Calu3 (cell line): ENCODE measurements at regions of chr18 and their contacts with region 1.

Region 1: DNA sequence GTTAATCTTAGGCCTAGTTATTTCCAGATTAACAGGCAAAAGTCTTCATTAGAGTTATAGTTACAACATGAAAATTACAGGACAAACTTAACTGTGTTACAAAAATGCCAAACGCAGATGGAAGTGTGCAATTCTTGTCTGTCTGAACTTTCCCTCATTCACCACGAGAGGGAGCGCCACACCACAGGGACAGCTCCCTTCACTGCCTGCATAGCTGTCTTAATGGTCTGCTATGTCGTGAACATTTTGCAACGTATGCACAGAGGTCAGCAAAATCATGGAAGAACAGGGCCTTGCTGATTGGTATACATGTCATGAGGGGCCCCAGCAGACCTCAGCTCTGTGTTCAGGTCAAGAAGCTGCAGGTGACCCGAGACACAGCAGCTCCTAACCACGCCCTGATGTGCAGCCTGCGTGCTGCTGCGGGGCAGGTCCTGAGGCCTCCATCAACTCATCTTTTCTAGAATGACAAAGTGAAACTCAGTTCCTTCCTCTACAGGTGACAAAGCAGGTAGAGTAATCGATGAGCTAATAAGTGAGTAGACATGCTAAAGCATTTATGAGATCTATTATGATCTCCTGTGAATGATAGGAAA is 78.8 kb upstream of the ATP8B1 start:
- DNase-seq: peak; percentile 78
- H3K4me3 Mint-ChIP-seq: no peak overlapping the region
- H3K27ac Mint-ChIP-seq: peak overlapping the region; percentile 37
- H3K4me1 Mint-ChIP-seq: peaks cover 31% of the 10 kb centered on the region
- H3K27me3 Mint-ChIP-seq: no peaks in the 10 kb centered on the region
- CTCF ChIP-seq: peak; percentile 85

Region 2: GRCh38 chr18:57748770-57749603 is 132.9 kb before region 1 on chr18:
- CTCF ChIA-PET with region 1: no interaction called
- intact Hi-C with region 1: no loop called
- DNase-seq: peak; percentile 46
- H3K4me3 Mint-ChIP-seq: peak overlapping the region; percentile 14
- H3K27ac Mint-ChIP-seq: peak overlapping the region; percentile 45
- H3K4me1 Mint-ChIP-seq: peaks cover 30% of the 10 kb centered on the region
- H3K27me3 Mint-ChIP-seq: no peaks in the 10 kb centered on the region
- CTCF ChIP-seq: no peak

Region 3: GRCh38 chr18:57895182-57895581 is 13.3 kb after region 1 on chr18:
- CTCF ChIA-PET with region 1: no interaction called
- intact Hi-C with region 1: no loop called
- DNase-seq: no peak
- H3K4me3 Mint-ChIP-seq: no peak overlapping the region
- H3K27ac Mint-ChIP-seq: no peak overlapping the region
- H3K4me1 Mint-ChIP-seq: peaks cover 46% of the 10 kb centered on the region
- H3K27me3 Mint-ChIP-seq: no peaks in the 10 kb centered on the region
- CTCF ChIP-seq: no peak

Region 4: DNA sequence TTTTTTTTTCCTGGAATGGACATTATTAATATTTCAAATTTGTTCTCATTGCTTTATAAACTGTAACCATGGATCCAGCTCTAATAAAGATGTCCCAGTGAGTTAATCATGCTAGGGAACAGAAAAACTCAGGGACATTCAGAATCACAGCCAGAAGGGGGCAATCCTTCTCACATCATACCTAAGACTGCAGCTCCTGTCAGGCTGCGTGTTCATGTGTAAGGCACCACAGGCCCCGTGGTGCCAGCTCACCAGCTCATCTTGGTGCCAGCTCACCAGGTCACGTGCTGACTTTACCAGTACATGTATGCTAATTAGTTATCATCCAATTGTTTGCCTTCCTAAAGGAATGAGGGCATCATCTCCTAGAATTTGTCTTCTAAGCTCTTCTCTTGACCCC is 77.4 kb after region 1 on chr18:
- CTCF ChIA-PET with region 1: interaction called, 11 read pairs
- intact Hi-C with region 1: loop called (anchors 5 kb)
- DNase-seq: peak; percentile 72
- H3K4me3 Mint-ChIP-seq: no peak overlapping the region
- H3K27ac Mint-ChIP-seq: no peak overlapping the region
- H3K4me1 Mint-ChIP-seq: peaks cover 31% of the 10 kb centered on the region
- H3K27me3 Mint-ChIP-seq: no peaks in the 10 kb centered on the region
- CTCF ChIP-seq: no peak

Region 5: GRCh38 chr18:58117786-58118403 is 236.0 kb after region 1 on chr18:
- CTCF ChIA-PET with region 1: interaction called, 14 read pairs
- intact Hi-C with region 1: loop called (anchors 5 kb)
- DNase-seq: peak; percentile 67
- H3K4me3 Mint-ChIP-seq: peak overlapping the region; percentile 43
- H3K27ac Mint-ChIP-seq: peak overlapping the region; percentile 96
- H3K4me1 Mint-ChIP-seq: peaks cover 66% of the 10 kb centered on the region
- H3K27me3 Mint-ChIP-seq: no peaks in the 10 kb centered on the region
- CTCF ChIP-seq: no peak

Region 6: GRCh38 chr18:58124475-58124874 is 242.6 kb after region 1 on chr18:
- CTCF ChIA-PET with region 1: interaction called, 14 read pairs
- intact Hi-C with region 1: loop called (anchors 5 kb)
- DNase-seq: no peak
- H3K4me3 Mint-ChIP-seq: no peak overlapping the region
- H3K27ac Mint-ChIP-seq: no peak overlapping the region
- H3K4me1 Mint-ChIP-seq: peaks cover 40% of the 10 kb centered on the region
- H3K27me3 Mint-ChIP-seq: no peaks in the 10 kb centered on the region
- CTCF ChIP-seq: no peak

Region 7: DNA sequence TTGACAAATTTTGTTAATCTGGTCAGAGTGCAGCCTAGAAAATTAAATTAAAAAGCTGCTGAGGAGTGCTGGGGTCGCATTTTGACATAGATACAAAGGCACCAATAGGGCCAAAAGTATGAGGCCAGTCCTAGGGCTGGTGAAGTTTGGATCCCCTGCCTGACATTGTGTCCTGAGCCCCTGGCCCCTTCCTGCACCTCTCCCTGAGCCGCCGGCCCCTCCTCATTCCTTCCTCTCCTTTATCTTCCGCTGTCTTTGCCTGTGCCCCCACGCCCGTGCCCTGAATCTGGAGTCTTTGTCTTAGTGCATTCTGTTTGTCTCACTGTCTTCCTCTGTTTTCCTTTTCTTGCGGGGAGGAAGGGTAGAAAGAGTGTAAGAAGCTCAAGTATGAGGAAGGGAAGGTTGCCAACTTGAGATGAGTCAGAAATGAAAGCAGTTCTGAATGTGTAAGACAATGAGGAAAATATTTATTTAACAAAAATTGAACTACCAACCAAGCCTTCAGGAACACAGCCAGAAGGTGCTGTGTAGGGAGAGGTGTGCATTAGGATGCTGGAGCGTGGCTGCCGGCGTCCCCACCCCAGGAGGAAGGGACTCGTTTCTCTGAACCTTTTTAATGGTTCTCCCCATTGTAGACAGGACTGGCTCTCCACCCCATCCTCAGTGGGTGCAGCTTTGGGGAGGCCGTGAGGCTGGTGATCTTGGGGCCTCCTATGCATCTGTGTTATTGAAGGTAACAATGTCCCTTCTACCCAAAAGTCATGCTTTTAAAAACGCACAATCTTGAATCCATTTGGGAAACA is 295.2 kb after region 1 on chr18:
- CTCF ChIA-PET with region 1: interaction called, 3 read pairs
- intact Hi-C with region 1: loop called (anchors 5 kb)
- DNase-seq: peak; percentile 63
- H3K4me3 Mint-ChIP-seq: peak overlapping the region; percentile 8
- H3K27ac Mint-ChIP-seq: peak overlapping the region; percentile 51
- H3K4me1 Mint-ChIP-seq: peaks cover 69% of the 10 kb centered on the region
- H3K27me3 Mint-ChIP-seq: no peaks in the 10 kb centered on the region
- CTCF ChIP-seq: no peak

Region 8: DNA sequence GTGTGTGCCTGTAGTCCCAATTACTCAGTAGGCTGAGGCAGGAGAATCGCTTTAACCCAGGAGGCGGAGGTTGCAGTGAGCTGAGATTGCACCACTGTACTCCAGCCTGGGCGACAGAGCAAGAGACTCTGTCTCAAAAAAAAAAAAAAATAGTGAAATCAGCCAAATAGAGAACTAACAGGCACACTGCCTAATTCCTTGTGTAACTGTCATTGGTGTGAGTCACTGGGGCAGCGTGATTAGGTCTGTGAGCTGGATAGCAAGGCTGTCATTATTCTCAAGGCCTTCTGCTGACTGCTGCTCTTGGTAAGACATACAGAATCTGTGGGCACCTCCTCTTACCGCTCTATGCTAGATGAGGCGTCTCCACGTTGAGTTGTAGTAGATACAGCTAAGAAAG is 432.4 kb after region 1 on chr18:
- CTCF ChIA-PET with region 1: no interaction called
- intact Hi-C with region 1: loop called (anchors 10 kb)
- DNase-seq: peak; percentile 49
- H3K4me3 Mint-ChIP-seq: peak overlapping the region; percentile 59
- H3K27ac Mint-ChIP-seq: peak overlapping the region; percentile 58
- H3K4me1 Mint-ChIP-seq: peaks cover 78% of the 10 kb centered on the region
- H3K27me3 Mint-ChIP-seq: no peaks in the 10 kb centered on the region
- CTCF ChIP-seq: no peak

Region 9: GRCh38 chr18:58493516-58494253 is 611.8 kb after region 1 on chr18:
- CTCF ChIA-PET with region 1: no interaction called
- intact Hi-C with region 1: loop called (anchors 10 kb)
- DNase-seq: peak; percentile 80
- H3K4me3 Mint-ChIP-seq: no peak overlapping the region
- H3K27ac Mint-ChIP-seq: no peak overlapping the region
- H3K4me1 Mint-ChIP-seq: peaks cover 46% of the 10 kb centered on the region
- H3K27me3 Mint-ChIP-seq: peaks cover 4% of the 10 kb centered on the region
- CTCF ChIP-seq: peak; percentile 72